BJ (cell line): ENCODE measurements at regions of chr1 and their contacts with region 1.

Region 1: DNA sequence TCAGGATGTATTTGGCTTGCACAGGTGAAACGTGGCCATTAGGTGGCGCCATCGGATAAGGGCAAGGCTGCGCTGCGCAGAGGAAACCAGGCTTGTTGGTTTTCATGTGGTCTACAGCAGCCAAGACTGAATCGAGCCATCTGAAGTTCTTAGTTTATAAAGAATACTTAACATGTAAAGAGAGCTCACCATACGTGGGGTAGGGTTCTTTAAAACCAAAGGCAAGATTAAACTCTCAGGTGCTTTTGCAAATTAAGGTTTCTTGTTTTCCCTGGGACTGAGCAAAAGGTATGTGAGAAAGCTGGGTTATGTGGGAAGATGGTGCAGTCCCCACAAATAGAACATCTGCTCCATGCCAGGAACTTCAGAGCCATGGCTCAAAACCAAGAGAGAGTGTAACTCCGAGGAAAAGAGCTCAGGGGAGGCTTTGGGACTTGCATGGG is 9.3 kb downstream of the MASP2 start:
- DNase-seq: peak; percentile 26
- H3K4me3 ChIP-seq: no peak overlapping the region
- H3K27me3 ChIP-seq: peaks cover 4% of the 10 kb centered on the region
- CTCF ChIP-seq: peak; percentile 96

Region 2: DNA sequence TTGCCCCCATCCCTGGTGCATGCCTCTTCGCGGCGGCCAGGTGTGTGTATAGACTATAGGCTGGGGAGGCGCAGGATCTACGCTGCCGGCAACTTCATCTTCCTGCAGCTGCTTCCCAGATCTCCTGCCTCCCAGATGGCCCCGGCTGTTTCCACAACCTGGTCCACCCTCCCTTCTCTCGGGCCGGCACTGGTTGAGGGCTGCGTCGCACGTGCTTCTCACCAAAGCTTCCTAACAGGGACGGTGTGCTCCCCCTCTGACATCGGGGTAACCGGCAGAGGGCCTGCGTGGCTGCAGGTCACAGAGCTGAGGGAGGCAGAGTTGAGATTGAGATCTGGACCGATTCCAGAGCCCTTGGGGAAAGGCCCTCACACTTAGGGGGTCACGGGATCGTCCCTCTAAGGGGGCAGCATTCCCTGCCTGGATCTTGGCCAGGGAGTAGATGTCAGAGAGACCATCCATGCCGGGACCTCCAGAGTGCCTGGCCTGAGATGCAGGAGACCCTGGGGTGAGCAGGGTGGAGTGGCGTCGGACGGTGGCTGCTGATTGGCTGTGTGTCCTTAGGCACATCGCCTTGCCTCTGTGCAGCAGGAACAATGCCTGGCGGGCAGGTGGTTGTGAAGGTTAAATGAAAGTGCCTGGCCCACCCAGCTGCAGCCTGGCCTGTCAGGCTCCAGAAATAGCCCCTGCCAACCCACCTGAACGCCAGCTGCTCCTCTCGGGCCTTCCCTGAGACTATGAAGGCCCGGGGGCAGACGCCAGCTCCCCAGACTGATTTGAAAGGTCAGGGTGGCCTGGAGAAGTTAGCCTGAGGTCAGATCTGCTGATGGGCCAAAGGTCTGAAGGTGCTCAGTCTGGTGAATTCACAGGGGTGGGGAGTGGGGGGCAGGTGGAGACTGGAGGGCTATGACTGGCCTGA is 15.3 kb after region 1 on chr1:
- CTCF ChIA-PET with region 1: interaction called, 36 read pairs
- POLR2A ChIA-PET with region 1: no interaction called
- DNase-seq: no peak
- H3K4me3 ChIP-seq: no peak overlapping the region
- H3K27me3 ChIP-seq: no peaks in the 10 kb centered on the region
- CTCF ChIP-seq: no peak

Region 3: DNA sequence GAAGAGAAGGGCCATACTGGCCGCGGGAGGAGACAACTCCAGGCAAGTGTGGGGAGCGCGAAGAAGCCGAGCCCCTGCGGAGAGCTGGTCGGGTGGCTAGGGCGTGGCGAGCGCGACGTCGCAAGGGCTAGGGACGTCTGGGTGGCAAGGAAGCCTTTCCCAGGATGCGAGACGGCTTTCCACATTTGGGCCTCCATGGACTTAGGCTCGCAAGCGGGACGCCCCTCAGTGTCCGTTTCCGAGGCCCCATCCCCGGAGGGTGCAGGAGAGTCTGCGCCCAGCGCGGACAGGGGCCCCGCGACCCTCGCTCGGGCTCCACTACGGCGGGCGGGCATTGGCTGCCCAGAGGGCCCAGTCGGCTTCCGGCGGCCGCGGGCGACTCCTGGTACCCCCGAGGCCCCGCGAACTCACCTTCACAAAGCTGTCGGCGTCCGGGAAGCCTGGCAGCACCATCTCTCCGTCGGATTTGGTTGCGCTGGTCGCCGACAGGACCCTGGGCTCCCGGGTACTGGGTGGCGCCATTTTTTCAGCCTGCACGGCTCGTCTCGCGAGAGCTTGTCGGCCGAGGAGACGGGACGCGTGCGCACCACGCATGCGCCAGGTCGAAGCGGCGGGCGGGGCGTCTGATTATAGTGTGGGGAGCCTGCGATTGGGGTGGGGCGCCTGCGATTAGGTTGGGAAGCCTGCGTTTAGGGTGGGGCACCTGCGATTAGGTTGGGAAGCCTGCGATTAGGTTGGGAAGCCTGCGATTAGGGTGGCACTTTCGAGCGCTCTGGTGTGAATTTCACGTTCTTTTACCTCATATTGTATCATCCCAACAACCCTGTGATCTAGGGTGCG is 61.8 kb after region 1 on chr1 and contains the start of gene EXOSC10:
- CTCF ChIA-PET with region 1: interaction called, 10 read pairs
- POLR2A ChIA-PET with region 1: no interaction called
- DNase-seq: no peak
- H3K4me3 ChIP-seq: peak within 1 kb of the TSS; percentile 99
- H3K27me3 ChIP-seq: no peaks in the 10 kb centered on the region
- CTCF ChIP-seq: no peak
- polyA plus RNA-seq, gene EXOSC10: 72.1 and 74.6 TPM in 2 replicates

Region 4: DNA sequence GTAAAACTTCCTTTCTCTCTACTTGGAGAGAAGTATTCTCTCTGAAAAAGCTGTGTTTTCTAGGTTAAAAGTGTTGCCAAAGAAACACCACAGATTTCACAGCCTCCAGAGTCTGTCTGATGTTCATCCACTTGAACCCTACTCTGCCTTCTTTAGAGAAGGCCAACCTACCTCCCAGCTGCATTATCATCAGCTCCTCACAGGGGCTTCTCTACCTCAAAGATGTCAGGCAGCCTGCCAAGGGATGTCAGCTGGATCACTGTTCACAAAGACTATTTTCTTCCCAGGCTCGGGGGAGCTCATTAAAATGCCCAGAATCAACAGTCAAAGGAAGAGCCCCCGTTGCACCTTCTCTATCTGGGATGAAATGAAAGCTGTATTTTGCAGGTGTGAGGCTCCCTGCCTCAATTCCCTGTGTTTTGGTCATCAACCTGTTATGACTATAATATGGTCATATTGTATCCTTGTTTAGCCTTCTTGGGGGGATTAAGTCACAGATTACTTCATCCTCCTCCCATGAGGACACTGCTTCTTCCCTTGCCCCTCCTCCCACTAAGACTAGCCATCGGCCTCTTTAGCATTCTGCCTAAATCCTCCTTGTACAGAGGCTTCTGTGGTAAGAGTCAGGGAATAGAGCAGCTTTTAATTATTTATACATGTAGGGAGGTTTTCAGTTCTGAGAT is 177.1 kb after region 1 on chr1:
- CTCF ChIA-PET with region 1: interaction called, 10 read pairs
- POLR2A ChIA-PET with region 1: no interaction called
- DNase-seq: no peak
- H3K4me3 ChIP-seq: no peak overlapping the region
- H3K27me3 ChIP-seq: no peaks in the 10 kb centered on the region
- CTCF ChIP-seq: no peak

Region 5: GRCh38 chr1:11237356-11237755 is 199.6 kb after region 1 on chr1:
- CTCF ChIA-PET with region 1: interaction called, 36 read pairs
- POLR2A ChIA-PET with region 1: no interaction called
- DNase-seq: no peak
- H3K4me3 ChIP-seq: no peak overlapping the region
- H3K27me3 ChIP-seq: no peaks in the 10 kb centered on the region
- CTCF ChIP-seq: no peak

Region 6: DNA sequence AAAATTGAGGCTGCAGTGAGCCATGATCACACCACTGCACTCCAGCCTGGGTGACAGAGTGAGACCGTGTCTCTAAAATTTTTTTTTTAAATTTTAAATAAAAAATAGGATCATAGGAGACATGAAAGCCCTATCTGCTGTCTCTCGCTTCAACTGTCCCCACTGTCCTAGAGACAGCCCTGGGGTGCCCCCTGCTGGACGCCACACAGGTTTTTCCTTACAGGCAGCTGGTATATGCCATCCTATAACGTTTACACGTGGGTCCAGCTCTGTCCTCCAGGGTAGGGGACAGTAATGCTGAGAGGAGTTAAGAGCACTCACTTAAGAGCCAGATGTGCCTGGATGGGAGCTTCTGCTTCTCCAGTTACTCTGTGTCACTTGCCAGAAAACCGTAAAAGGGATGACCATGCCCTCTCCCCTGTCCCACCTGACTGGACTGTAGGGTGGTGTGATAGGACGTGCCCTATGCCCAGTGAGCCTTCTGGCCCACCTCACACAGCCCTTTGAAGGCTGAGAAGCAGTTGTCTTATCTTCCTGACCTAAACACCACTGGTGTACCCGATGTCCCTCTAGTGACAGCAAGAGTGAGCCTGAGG is 608.0 kb after region 1 on chr1:
- CTCF ChIA-PET with region 1: interaction called, 192 read pairs
- POLR2A ChIA-PET with region 1: no interaction called
- DNase-seq: no peak
- H3K4me3 ChIP-seq: no peak overlapping the region
- H3K27me3 ChIP-seq: peaks cover 6% of the 10 kb centered on the region
- CTCF ChIP-seq: peak; percentile 84

Region 7: DNA sequence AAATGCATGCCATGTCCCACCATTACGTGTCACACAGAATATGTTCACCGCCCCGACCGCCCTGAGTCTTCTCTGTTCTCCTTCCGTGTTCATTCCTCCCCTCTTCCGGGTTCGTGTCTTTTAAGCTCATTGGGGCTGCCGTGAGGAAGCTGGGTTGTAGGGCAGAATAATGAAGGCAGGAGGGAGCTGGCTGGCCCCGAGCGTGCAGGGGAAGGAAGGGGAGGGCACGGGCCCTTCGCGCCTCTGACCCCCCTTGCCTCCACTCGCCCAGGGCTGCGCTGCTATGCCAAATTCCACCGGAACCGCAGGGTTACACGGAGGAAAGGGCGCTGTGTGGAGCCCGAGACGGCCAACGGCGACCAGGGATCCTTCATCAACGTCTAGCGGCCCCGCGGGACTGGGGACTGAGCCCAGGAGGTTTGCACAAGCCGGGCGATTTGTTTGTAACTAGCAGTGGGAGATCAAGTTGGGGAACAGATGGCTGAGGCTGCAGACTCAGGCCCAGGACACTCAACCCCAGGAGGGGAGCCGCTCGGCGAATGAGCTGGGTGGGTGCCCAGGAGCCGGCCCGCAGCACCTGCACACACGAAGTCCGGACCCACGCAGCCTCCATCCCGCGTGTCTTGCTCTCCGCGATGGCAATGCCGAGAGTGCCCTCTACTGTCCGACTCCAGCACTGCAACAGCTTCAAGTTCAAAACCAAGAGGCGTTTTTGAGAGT is 681.7 kb after region 1 on chr1:
- CTCF ChIA-PET with region 1: interaction called, 14 read pairs
- POLR2A ChIA-PET with region 1: no interaction called
- DNase-seq: no peak
- H3K4me3 ChIP-seq: peak overlapping the region; percentile 21; the same call in 1 of the 2 replicates
- H3K27me3 ChIP-seq: peaks cover 2% of the 10 kb centered on the region
- CTCF ChIP-seq: peak; percentile 97